ENCODE measurements at regions of chr1 and their contacts with region 1.

Region 1: GRCh38 chr1:147599362-147600118 is 58.2 kb downstream of the BCL9 start:
- DNase-seq: peak; percentile 98
- H3K4me3 ChIP-seq: peak overlapping the region; percentile 68
- H3K4me3 Mint-ChIP-seq: peak overlapping the region; percentile 78
- H3K27ac Mint-ChIP-seq: peak overlapping the region; percentile 57
- H3K4me1 ChIP-seq: peaks cover 13% of the 10 kb centered on the region
- H3K4me1 Mint-ChIP-seq: peaks cover 15% of the 10 kb centered on the region
- H3K27me3 ChIP-seq: no peaks in the 10 kb centered on the region
- H3K27me3 Mint-ChIP-seq: no peaks in the 10 kb centered on the region
- CTCF ChIP-seq: no peak

Region 2: GRCh38 chr1:147172168-147172992 is 427.2 kb before region 1 on chr1 and contains the start of gene PRKAB2:
- CTCF ChIA-PET with region 1: no interaction called
- POLR2A ChIA-PET with region 1: no interaction called
- intact Hi-C with region 1: loop called (anchors 5 kb)
- DNase-seq: peak; percentile 96 to 98
- H3K4me3 ChIP-seq: peak within 1 kb of the TSS; percentile 98
- H3K4me3 Mint-ChIP-seq: peak within 1 kb of the TSS; percentile 96
- H3K27ac Mint-ChIP-seq: peak within 1 kb of the TSS; percentile 98
- H3K4me1 ChIP-seq: peaks cover 36% of the 10 kb centered on the region
- H3K4me1 Mint-ChIP-seq: peaks cover 34% of the 10 kb centered on the region
- H3K27me3 ChIP-seq: no peaks in the 10 kb centered on the region
- H3K27me3 Mint-ChIP-seq: no peaks in the 10 kb centered on the region
- CTCF ChIP-seq: peak; percentile 87 to 88
- total RNA-seq, gene PRKAB2: 30.1 and 31.5 TPM in 2 replicates

Region 3: DNA sequence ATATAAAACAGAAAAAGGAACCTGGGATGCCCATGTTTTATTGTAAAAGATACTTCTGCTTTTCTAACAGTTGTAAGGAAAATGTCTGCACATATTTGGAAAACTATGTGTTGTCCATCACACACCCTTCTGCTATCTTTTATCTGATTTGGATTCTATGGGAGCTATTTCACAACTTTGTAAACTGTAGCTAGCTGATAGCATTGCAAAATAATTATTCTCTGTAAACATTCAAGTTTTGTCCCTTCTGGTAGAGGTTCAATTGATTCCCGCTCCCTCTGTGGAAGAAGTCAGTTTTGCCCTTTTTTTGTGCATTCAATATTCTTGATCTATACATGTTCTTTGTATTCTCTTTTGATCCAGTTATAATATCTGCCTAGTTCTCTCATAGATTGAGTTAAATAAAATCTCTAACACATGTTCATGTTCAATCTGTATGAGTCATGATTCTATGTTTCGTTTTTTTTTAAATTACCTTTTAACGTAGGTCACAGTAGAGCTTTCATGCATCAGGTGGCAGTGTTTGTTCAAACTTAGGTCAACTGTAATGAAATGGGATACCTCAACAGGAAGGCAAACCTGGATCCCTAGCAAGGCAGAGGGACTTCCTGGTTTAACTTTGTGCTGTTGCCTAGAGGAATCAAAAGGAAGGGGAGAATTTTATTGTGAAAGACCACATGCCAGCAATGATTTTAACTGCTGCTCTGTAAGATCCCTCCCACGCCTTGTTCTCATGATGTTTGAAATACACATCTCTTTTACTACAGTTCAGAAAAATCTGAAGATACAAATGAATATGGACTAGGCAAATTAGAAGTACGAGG is 84.3 kb before region 1 on chr1:
- CTCF ChIA-PET with region 1: interaction called, 3 read pairs
- POLR2A ChIA-PET with region 1: no interaction called
- intact Hi-C with region 1: loop called (anchors 1 kb)
- DNase-seq: peak; percentile 66 to 71
- H3K4me3 ChIP-seq: no peak overlapping the region
- H3K4me3 Mint-ChIP-seq: no peak overlapping the region
- H3K27ac Mint-ChIP-seq: peak overlapping the region; percentile 36
- H3K4me1 ChIP-seq: peaks cover 23% of the 10 kb centered on the region
- H3K4me1 Mint-ChIP-seq: peaks cover 18% of the 10 kb centered on the region
- H3K27me3 ChIP-seq: no peaks in the 10 kb centered on the region
- H3K27me3 Mint-ChIP-seq: no peaks in the 10 kb centered on the region
- CTCF ChIP-seq: peak; percentile 30 to 32

Region 4: DNA sequence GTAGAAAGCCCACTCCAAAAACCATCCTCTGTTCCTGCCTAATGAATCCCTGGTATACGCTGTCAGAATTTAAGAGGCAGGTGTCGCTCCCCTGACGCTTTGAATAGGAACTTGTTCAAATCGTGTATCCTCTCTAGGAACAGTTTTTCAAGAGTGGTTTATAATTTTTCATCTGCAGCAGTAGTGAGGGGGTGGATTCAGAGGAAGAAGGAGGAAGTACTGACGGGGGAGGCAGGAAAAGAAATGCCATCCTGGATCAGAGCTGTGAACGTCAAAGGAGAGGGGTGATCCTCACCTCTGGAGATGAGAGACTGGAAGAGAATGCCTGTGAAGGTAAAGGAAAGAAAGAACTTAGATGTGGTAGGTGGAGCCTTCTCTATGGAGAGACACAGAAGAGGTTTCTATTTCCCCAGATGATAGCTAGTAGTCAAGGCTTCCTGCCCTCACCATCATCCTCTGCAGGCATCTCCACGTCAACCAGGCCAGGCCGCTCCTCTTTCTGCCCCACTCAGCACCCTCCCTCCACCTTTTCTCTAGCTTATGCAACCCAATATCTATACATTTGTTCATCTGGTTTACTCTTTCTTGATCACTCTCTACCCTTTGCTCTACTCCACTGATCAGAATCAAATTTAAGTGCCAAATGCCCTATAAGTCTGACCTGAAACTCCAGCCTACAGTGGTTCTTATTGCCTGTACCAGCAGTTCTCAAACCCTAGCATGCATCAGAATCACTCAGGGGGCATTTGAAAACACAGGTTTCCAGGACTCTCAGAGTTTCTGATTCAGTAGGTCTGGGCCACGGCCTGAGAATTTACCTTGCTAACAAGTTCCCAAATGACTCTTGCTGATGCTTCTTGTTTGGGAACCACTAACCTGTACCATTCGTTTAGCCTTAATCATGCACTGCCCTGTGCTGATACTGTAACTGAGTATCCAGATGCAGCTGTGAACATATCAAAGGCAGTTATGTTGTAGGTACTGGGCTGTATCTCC is 71.3 kb before region 1 on chr1:
- CTCF ChIA-PET with region 1: no interaction called
- POLR2A ChIA-PET with region 1: no interaction called
- intact Hi-C with region 1: no loop called
- DNase-seq: no peak
- H3K4me3 ChIP-seq: no peak overlapping the region
- H3K4me3 Mint-ChIP-seq: no peak overlapping the region
- H3K27ac Mint-ChIP-seq: no peak overlapping the region
- H3K4me1 ChIP-seq: no peaks in the 10 kb centered on the region
- H3K4me1 Mint-ChIP-seq: no peaks in the 10 kb centered on the region
- H3K27me3 ChIP-seq: no peaks in the 10 kb centered on the region
- H3K27me3 Mint-ChIP-seq: peaks cover 3% of the 10 kb centered on the region
- CTCF ChIP-seq: no peak

Region 5: DNA sequence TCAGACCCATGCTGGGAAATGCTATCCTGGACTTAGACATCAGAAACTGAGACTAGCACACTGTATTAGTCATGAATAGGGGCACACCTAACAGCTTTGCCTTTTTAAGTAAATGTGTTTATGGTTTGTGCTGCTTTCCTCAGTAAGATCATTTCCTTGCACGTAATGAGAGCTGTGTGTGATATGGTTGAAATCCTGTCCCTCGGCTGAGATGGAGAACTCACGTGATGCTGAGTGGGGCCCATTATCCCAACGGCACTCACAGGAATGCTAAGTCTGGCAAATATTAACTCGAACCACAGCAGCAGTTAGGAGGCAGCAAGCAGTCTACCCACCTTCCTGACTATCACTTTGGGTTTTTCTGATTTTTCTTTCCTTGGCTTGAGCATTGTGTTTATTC is 20.0 kb before region 1 on chr1:
- CTCF ChIA-PET with region 1: no interaction called
- POLR2A ChIA-PET with region 1: interaction called, 5 read pairs
- intact Hi-C with region 1: loop called (anchors 1 kb)
- DNase-seq: peak; percentile 73 to 84
- H3K4me3 ChIP-seq: no peak overlapping the region
- H3K4me3 Mint-ChIP-seq: peak overlapping the region; percentile 49
- H3K27ac Mint-ChIP-seq: peak overlapping the region; percentile 46
- H3K4me1 ChIP-seq: peaks cover 38% of the 10 kb centered on the region
- H3K4me1 Mint-ChIP-seq: peaks cover 23% of the 10 kb centered on the region
- H3K27me3 ChIP-seq: no peaks in the 10 kb centered on the region
- H3K27me3 Mint-ChIP-seq: no peaks in the 10 kb centered on the region
- CTCF ChIP-seq: no peak

Region 6: DNA sequence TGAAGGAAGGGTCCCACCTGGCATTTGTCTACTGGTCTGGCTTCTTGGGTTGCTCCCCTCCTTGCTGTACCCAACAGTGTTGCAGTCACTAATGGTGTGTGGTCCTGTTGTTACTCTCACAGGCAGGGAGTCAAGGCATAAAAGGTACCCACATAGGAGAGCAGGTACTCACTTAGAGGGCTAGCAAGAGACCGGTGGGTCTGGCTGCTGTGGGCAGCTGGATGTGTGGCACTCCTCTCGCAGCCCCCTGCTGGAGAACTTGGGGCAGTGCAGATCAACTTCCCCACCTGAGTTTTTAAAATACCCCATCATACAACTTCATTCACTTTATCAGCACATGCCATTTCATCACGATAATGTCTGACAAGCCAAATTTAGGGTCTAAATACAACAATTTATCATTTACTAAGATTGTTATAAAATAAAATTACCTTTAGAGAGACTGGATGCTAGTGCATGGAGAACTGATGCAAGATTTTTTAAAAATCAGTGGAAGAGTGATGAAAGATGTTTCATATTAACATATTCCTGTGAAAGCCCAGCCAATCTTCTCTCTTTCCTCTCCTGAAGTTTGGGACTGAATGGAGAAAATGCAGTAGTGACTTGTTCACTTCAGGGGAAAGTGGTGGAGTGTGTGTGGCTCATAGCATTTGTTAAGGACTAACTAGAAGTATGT is 28.0 kb after region 1 on chr1:
- CTCF ChIA-PET with region 1: interaction called, 9 read pairs
- POLR2A ChIA-PET with region 1: interaction called, 4 read pairs
- intact Hi-C with region 1: loop called (anchors 1 kb)
- DNase-seq: peak; percentile 59 to 65
- H3K4me3 ChIP-seq: no peak overlapping the region
- H3K4me3 Mint-ChIP-seq: no peak overlapping the region
- H3K27ac Mint-ChIP-seq: no peak overlapping the region
- H3K4me1 ChIP-seq: peaks cover 30% of the 10 kb centered on the region
- H3K4me1 Mint-ChIP-seq: peaks cover 35% of the 10 kb centered on the region
- H3K27me3 ChIP-seq: no peaks in the 10 kb centered on the region
- H3K27me3 Mint-ChIP-seq: no peaks in the 10 kb centered on the region
- CTCF ChIP-seq: peak; percentile 88 to 90

Region 7: GRCh38 chr1:147700042-147701006 is 100.8 kb after region 1 on chr1:
- CTCF ChIA-PET with region 1: no interaction called
- POLR2A ChIA-PET with region 1: no interaction called
- intact Hi-C with region 1: no loop called
- DNase-seq: peak; percentile 49 to 63
- H3K4me3 ChIP-seq: no peak overlapping the region
- H3K4me3 Mint-ChIP-seq: no peak overlapping the region
- H3K27ac Mint-ChIP-seq: no peak overlapping the region
- H3K4me1 ChIP-seq: no peaks in the 10 kb centered on the region
- H3K4me1 Mint-ChIP-seq: no peaks in the 10 kb centered on the region
- H3K27me3 ChIP-seq: no peaks in the 10 kb centered on the region
- H3K27me3 Mint-ChIP-seq: no peaks in the 10 kb centered on the region
- CTCF ChIP-seq: peak; percentile 83 to 88

Region 8: DNA sequence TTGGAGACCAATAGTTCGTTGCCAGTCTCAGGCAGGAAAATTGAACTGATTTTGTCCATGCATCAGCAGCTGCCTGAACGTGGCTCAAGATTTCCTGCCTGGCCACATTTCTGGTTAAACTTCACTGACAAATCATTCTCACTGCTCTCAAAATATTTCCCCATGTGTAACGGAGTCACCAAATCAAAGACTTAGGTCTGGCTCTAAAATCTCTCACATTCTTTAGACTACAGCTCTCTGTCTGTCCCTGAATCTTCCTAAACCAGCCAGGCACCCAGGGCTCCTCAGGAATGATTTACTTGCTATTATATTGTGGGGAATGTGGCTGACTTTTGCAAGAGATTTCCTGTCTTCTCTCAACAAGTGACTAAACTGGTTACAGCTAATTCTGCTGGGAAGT is 253.9 kb after region 1 on chr1:
- CTCF ChIA-PET with region 1: no interaction called
- POLR2A ChIA-PET with region 1: interaction called, 11 read pairs
- intact Hi-C with region 1: no loop called
- DNase-seq: peak in 1 of 2 experiments; percentile 17
- H3K4me3 ChIP-seq: no peak overlapping the region
- H3K4me3 Mint-ChIP-seq: no peak overlapping the region
- H3K27ac Mint-ChIP-seq: no peak overlapping the region
- H3K4me1 ChIP-seq: peaks cover 22% of the 10 kb centered on the region
- H3K4me1 Mint-ChIP-seq: peaks cover 19% of the 10 kb centered on the region
- H3K27me3 ChIP-seq: no peaks in the 10 kb centered on the region
- H3K27me3 Mint-ChIP-seq: no peaks in the 10 kb centered on the region
- CTCF ChIP-seq: no peak